ENCODE measurements at regions of chr21 and their contacts with region 1.

Region 1: DNA sequence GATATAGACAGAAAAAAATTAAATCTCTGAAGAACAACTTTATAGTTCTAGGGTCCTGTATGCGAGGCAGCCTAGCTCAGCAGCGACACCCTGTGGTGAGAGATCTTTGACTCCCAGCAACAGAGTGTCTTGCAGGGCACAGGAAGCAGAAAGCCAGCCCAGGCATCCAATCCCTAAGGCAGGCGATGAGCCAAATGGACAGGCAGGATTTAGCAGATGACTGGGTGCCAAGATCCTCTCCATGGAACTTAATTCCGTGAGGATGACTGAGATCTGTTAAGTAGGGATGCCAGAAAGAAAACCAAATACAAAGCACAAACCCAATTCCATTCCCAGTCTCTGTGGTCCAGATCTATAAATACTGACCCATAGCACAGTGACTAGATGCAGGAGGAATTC is 38.8 kb downstream of the HLCS start:
- DNase-seq: peak; percentile 70
- H3K4me3 ChIP-seq: no peak overlapping the region
- H3K27ac ChIP-seq: no peak overlapping the region
- H3K4me1 ChIP-seq: no peaks in the 10 kb centered on the region
- CTCF ChIP-seq: peak; percentile 99

Region 2: GRCh38 chr21:36419996-36420395 is 507.7 kb before region 1 on chr21:
- CTCF ChIA-PET with region 1: no interaction called
- POLR2A ChIA-PET with region 1: no interaction called
- intact Hi-C with region 1: loop called (anchors 5 kb)
- DNase-seq: peak; percentile 63
- H3K4me3 ChIP-seq: no peak overlapping the region
- H3K27ac ChIP-seq: no peak overlapping the region
- H3K4me1 ChIP-seq: no peaks in the 10 kb centered on the region
- CTCF ChIP-seq: peak; percentile 85

Region 3: DNA sequence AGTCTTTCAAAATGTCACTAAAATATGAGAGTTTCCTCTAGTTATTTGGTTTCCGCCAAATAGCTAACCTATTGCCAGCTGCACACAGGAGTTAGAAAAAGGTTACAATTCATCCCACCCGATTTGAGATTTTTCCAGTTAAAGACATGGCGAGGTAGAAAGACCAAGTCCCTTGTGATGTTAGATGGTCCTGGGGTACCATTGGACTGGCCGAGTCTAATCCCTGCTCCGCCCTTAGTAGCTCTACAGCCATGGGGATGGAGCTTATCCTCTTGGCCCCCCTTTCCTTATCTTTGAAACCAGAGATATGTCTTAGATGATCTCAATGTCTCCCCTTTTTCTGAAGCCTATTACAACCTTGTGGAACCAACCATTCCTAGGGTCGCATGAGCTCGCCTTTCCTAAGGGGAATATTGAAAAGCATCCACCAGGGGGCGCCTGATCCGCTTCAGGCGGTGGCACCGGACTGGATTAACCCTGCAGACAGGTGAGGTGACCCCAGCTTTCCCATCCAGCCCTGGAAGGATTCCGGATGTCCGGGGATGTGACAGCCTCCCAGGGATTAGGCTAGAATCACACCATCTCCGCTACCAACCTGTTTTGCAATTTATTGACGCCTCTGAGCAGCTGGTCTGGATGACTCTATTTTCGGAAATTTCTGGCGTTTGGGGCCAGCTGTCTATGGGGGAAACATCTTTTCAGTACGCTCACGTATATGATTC is 297.1 kb before region 1 on chr21:
- CTCF ChIA-PET with region 1: interaction called, 3 read pairs
- POLR2A ChIA-PET with region 1: no interaction called
- intact Hi-C with region 1: loop called (anchors 2 kb)
- DNase-seq: peak; percentile 68
- H3K4me3 ChIP-seq: no peak overlapping the region
- H3K27ac ChIP-seq: no peak overlapping the region
- H3K4me1 ChIP-seq: no peaks in the 10 kb centered on the region
- CTCF ChIP-seq: peak; percentile 92

Region 4: DNA sequence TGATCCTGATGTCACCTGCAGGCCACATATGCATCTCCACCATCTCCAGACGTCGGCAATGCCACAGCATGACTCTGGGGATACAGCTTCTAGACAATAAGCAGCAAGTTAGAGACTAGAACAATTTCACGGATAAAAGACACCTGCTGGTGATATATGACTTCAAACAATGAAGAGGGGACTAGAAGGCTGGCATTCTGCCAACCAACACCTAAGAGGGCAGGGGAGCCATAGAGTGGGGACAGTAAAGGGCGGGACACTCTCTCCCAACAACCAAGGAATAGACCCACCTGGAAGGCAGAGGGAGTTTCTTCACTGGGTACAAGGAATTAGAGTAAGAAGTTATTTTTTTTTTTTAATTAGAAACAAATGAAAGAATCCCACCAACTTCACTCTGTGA is 102.0 kb before region 1 on chr21:
- CTCF ChIA-PET with region 1: no interaction called
- POLR2A ChIA-PET with region 1: no interaction called
- intact Hi-C with region 1: no loop called
- DNase-seq: no peak
- H3K4me3 ChIP-seq: no peak overlapping the region
- H3K27ac ChIP-seq: no peak overlapping the region
- H3K4me1 ChIP-seq: no peaks in the 10 kb centered on the region
- CTCF ChIP-seq: no peak

Region 5: DNA sequence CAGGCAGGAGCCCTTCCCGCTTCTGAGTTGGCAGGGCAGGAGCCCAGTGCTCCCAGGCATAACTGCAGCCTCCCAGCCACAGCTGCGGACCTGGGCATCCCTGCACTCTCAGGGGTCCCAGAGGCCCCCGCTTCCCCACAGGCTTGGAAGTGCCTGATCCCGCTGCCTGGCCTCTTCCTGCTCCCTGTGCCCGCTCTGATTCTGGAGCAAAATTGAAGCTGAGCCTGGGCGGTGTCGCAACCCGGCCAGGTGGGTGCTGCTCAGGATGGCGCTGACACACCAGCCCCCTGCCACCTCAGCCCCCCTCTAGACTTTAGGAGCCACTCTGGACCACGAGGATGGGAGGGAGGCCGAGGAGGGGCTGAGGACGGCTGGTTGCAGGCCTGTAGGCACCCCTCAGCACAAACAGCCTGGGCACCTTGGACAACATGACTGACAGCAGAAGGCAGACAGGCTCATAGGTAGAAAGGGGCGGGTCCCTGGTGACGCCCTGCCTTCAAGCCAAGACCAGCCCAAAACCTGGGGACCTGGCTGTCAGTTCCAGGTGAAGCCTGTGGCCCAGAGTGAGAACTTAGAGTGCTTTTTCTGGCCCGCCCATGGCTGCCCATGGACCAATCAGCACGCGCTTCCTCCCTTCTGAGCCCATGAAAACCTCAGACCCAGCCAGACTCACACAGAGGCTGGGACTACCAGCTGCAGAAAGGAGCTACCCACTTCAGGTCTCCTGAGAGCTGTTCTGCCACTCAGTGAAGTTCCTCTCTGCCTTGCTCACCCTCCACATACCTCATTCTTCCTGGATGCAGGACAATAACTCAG is 31.5 kb after region 1 on chr21:
- CTCF ChIA-PET with region 1: no interaction called
- POLR2A ChIA-PET with region 1: interaction called, 10 read pairs
- intact Hi-C with region 1: no loop called
- DNase-seq: no peak
- H3K4me3 ChIP-seq: no peak overlapping the region
- H3K27ac ChIP-seq: no peak overlapping the region
- H3K4me1 ChIP-seq: peaks cover under 1% of the 10 kb centered on the region
- CTCF ChIP-seq: no peak

Region 6: GRCh38 chr21:37237764-37238163 is 310.0 kb after region 1 on chr21:
- CTCF ChIA-PET with region 1: no interaction called
- POLR2A ChIA-PET with region 1: no interaction called
- intact Hi-C with region 1: no loop called
- DNase-seq: no peak
- H3K4me3 ChIP-seq: no peak overlapping the region
- H3K27ac ChIP-seq: no peak overlapping the region
- H3K4me1 ChIP-seq: peaks cover 3% of the 10 kb centered on the region
- CTCF ChIP-seq: no peak